Psoas muscle (tissue), 8 donors: ENCODE measurements at regions of chr1 and their contacts with region 1.

Region 1: DNA sequence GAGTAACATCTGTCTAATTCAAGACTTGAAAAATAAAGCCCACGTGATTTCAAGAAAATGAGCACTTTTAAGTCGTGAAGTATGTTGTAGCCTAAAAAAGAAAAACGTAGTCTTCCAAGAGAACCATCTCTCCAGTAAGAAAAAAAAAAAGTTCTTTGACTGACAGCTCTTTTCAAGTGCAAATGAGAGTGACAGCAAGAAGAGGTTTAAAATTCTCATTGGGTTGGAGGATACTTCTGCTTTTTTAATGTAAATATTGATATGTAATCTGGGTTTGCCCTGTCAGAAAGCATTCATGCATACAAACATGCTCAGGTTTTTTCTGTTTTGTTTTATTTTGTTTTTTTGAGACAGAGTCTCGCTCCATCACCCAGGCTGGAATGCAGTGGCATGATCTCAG is 32.3 kb upstream of the PRDM2 start:
- DNase-seq: no peak
- ATAC-seq: no peak
- H3K4me3 ChIP-seq: no peak overlapping the region
- H3K27ac ChIP-seq: no peak overlapping the region
- H3K4me1 ChIP-seq: no peaks in the 10 kb centered on the region
- H3K27me3 ChIP-seq: no peaks in the 10 kb centered on the region
- CTCF ChIP-seq: no peak

Region 2: GRCh38 chr1:13725714-13726175 is 58.1 kb after region 1 on chr1:
- intact Hi-C with region 1: loop called in 1 of 2 experiments (anchors 2 kb)
- DNase-seq: no peak
- ATAC-seq: no peak
- H3K4me3 ChIP-seq: no peak overlapping the region
- H3K27ac ChIP-seq: no peak overlapping the region
- H3K4me1 ChIP-seq: peaks cover 5% of the 10 kb centered on the region
- H3K27me3 ChIP-seq: no peaks in the 10 kb centered on the region
- CTCF ChIP-seq: no peak

Region 3: GRCh38 chr1:13813398-13814012 is 145.8 kb after region 1 on chr1:
- intact Hi-C with region 1: loop called (anchors 5 kb)
- DNase-seq: peak in 1 of 2 donors; percentile 72
- ATAC-seq: peak in 3 of 4 donors; percentile 40 to 50 (median 49)
- H3K4me3 ChIP-seq: no peak overlapping the region
- H3K27ac ChIP-seq: no peak overlapping the region
- H3K4me1 ChIP-seq: peaks cover 4% of the 10 kb centered on the region
- H3K27me3 ChIP-seq: no peaks in the 10 kb centered on the region
- CTCF ChIP-seq: peak; percentile 49

Region 4: DNA sequence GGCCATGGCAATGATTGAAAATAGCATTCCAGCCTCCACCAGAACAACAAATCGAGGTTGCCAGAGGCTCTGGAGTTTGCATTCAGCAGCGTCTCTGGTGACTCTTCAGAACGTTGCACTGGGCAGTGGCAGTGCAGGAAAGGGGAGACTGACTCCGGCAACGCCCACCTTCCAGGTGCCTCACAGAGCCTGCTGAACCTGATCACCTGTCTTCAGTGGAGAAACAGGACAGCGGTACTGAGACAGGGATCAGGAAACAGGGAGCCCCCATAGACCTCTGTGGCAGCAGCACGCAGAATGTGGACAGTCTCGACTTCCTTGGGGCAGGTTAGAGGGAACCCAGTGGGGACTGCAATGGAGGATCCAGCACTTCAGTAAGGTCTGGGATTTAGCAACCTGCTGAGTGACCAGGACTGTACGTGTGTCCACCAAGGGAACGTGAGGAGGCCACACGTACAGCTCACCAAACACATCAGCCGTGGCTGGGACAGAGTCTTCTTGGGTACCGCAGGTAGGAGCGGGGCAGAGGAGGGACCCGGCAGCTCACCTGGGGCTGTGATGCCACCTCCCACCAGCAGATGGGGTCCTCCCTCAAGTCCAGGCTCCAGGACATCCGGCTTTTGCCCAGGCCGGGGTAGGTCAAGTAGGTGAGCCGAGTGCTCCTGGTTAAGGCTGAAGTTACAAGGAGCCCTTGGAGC is 160.9 kb after region 1 on chr1:
- intact Hi-C with region 1: loop called in 1 of 2 experiments (anchors 5 kb)
- DNase-seq: peak in 1 of 2 donors; percentile 67
- ATAC-seq: peak; percentile 40 to 67 (median 59)
- H3K4me3 ChIP-seq: no peak overlapping the region
- H3K27ac ChIP-seq: no peak overlapping the region
- H3K4me1 ChIP-seq: no peaks in the 10 kb centered on the region
- H3K27me3 ChIP-seq: no peaks in the 10 kb centered on the region
- CTCF ChIP-seq: peak; percentile 43